OCI-LY7 (cell line): ENCODE measurements at regions of chr20 and their contacts with region 1.

Region 1: DNA sequence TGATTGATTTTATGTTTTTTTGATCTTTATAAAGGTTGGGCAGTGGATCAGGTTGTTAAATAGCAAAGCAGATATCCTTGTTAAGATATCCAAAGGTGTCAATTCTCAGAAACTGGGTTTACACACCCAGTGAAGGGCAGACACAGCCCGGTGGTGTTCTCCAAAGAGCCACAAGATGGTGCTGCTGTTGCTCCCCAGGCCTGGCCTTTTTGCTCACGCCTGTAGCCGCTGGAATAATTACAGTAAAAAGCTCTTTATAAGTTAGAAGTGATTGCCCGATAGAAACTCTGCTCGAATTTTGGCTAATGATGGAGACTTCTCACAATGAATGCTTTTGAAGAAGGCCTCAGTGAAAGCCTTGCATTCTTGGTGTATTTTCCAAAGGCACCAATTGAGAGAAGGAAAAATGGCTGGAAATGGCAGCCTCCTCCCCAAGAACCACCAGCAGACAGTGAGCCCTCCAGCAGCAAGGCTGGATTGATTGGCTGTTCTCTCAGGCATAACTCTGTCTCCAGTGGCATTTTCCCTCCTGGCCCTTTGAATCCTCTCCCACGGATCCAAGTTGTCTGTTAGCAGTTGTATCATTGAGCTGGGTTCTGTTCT is 120.5 kb upstream of the CHD6 start:
- DNase-seq: peak; percentile 58
- H3K4me3 ChIP-seq: no peak overlapping the region
- H3K27ac ChIP-seq: no peak overlapping the region
- H3K4me1 ChIP-seq: no peaks in the 10 kb centered on the region
- CTCF ChIP-seq: peak; percentile 96

Region 2: DNA sequence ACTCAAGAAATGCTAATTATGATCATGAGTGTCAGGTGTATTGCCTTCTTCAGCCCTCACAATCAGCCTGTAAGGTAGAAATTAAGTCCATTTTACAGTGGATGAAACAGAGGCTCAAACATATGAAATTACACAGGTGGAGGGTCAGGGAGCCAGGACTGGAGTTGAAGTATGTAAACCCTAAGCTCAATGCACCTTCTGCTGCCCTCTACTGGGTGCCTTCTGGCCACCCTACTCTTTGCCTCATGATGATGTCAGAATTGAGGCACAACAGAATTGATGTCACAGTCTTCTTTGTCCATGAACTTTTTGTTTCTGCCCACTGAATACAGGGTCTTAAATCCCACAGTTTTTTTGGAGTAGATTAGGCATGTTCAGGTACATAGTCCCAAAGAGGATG is 280.2 kb after region 1 on chr20:
- CTCF ChIA-PET with region 1: no interaction called
- POLR2A ChIA-PET with region 1: no interaction called
- intact Hi-C with region 1: loop called (anchors 5 kb)
- DNase-seq: peak; percentile 3
- H3K4me3 ChIP-seq: no peak overlapping the region
- H3K27ac ChIP-seq: no peak overlapping the region
- H3K4me1 ChIP-seq: no peaks in the 10 kb centered on the region
- CTCF ChIP-seq: peak; percentile 64

Region 3: GRCh38 chr20:42530822-42531448 is 792.2 kb after region 1 on chr20:
- CTCF ChIA-PET with region 1: no interaction called
- POLR2A ChIA-PET with region 1: no interaction called
- intact Hi-C with region 1: loop called (anchors 10 kb)
- DNase-seq: peak; percentile 40
- H3K4me3 ChIP-seq: no peak overlapping the region
- H3K27ac ChIP-seq: no peak overlapping the region
- H3K4me1 ChIP-seq: no peaks in the 10 kb centered on the region
- CTCF ChIP-seq: peak; percentile 84

Region 4: DNA sequence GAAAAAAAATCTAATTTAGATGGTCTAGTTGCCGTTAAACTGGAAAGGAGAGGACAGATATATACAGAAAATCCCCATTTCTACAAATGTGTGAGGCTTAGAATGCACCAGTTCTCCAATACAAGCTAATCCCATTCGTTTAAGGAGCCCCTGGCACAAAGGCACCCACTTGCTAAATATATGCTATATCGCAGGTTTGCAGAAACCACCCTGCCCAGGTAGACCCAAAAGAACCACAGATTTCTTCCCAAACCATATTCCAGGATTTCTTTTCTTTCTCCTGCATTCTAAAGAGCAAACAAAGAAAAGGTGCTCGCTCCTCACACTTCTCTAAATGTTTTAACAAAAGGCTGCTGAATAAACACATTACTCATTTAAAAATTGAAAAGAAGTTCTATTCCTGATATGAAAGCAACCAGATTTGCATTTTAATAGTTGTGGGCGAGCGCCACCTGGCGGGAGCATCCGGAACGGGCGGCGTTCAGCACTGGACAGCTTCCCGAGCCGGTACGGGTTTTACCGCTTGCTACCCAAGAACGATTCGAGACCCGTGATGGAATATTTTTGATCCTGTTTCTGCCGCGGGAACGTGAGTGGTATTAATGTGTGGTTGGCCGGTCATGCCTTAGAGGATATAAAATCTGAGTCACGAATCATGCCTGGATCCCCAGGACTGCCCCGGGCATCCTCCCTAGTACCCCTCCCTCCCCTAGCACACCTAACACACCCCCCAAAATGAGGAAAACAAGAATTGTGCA is 1449.0 kb after region 1 on chr20:
- CTCF ChIA-PET with region 1: no interaction called
- POLR2A ChIA-PET with region 1: no interaction called
- intact Hi-C with region 1: loop called (anchors 5 kb)
- DNase-seq: peak; percentile 49
- H3K4me3 ChIP-seq: no peak overlapping the region
- H3K27ac ChIP-seq: no peak overlapping the region
- H3K4me1 ChIP-seq: no peaks in the 10 kb centered on the region
- CTCF ChIP-seq: peak; percentile 97

Region 5: DNA sequence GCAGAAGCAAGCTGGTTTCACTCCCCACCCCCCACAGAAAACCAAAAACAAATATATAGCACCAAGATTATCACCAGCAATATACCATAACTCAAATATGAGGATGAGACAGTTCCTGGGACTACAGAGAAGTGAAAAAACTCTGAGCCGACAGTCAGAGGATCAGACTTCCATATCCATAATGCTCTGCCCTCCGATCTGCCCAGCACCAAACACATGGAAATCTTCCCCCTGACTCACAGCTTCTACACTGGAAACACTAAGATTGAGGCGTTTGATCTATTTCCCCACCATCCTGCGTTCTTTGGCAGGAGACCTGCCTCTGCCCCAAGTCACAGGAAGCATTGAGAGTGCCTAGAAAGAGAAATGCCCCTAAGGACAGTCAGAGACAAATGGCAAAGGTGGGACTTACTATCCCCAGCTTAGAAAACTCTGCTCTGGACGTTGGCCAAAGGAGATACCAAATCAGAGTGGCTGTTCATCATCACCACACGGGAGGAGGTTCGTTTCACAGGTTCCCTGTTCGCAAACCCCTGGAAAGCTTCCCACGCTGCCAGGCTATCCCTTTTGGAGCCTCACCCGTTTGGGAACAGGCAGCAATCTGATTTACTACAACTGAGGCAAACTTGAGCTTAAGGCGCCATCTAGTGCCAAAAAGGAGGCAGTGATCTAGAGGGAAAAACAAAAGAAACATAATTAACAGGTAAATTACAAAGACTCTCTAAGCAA is 1670.3 kb after region 1 on chr20:
- CTCF ChIA-PET with region 1: no interaction called
- POLR2A ChIA-PET with region 1: no interaction called
- intact Hi-C with region 1: loop called (anchors 5 kb)
- DNase-seq: peak; percentile 40
- H3K4me3 ChIP-seq: no peak overlapping the region
- H3K27ac ChIP-seq: no peak overlapping the region
- H3K4me1 ChIP-seq: no peaks in the 10 kb centered on the region
- CTCF ChIP-seq: peak; percentile 93